GM10248 (cell line): ENCODE measurements at regions of chr5 and their contacts with region 1.

Region 1: GRCh38 chr5:98768160-98769005 is 5.1 kb upstream of the RGMB start:
- DNase-seq: peak; percentile 53
- CTCF ChIP-seq: peak; percentile 90

Region 2: DNA sequence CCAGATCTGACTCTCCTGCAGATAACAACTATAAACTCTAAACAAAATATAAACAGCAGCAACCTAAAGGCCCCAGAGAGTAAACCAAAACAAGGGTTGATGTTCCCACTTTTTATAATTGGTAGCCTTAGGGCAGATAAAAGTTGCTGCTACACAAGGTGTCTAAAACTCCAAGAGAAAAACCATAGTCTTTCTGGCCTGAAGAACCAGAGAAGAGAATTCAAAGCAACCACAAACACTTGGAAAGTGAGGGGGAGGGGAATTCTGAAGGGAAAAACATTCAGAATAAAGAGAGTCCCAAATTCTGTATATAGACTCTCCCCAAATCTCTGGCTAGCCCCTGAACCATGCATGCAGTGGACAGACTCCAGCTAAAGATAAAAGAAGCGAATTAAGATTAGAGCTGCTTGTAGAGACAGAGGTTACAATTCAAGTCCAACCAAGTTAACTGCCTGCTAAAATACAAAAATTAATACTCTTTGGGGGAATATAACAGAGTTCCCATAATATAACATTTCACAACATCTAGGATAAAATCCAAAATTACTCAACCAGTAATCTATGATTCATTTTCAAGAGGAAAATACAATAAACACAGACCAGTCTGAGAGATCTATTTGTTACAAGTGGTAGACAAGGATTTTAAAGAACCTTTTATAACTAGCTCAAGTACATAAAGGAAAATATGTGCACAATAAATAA is 32.4 kb before region 1 on chr5:
- CTCF ChIA-PET with region 1: interaction called, 23 read pairs
- POLR2A ChIA-PET with region 1: no interaction called
- DNase-seq: no peak
- CTCF ChIP-seq: no peak

Region 3: GRCh38 chr5:98742396-98743073 is 25.8 kb before region 1 on chr5:
- CTCF ChIA-PET with region 1: interaction called, 23 read pairs
- POLR2A ChIA-PET with region 1: no interaction called
- DNase-seq: no peak
- CTCF ChIP-seq: no peak

Region 4: GRCh38 chr5:98750693-98751092 is 17.7 kb before region 1 on chr5:
- CTCF ChIA-PET with region 1: interaction called, 30 read pairs
- POLR2A ChIA-PET with region 1: no interaction called
- DNase-seq: no peak
- CTCF ChIP-seq: no peak

Region 5: GRCh38 chr5:98786191-98786853 is 17.9 kb after region 1 on chr5:
- CTCF ChIA-PET with region 1: interaction called, 87 read pairs
- POLR2A ChIA-PET with region 1: no interaction called
- DNase-seq: no peak
- CTCF ChIP-seq: no peak

Region 6: DNA sequence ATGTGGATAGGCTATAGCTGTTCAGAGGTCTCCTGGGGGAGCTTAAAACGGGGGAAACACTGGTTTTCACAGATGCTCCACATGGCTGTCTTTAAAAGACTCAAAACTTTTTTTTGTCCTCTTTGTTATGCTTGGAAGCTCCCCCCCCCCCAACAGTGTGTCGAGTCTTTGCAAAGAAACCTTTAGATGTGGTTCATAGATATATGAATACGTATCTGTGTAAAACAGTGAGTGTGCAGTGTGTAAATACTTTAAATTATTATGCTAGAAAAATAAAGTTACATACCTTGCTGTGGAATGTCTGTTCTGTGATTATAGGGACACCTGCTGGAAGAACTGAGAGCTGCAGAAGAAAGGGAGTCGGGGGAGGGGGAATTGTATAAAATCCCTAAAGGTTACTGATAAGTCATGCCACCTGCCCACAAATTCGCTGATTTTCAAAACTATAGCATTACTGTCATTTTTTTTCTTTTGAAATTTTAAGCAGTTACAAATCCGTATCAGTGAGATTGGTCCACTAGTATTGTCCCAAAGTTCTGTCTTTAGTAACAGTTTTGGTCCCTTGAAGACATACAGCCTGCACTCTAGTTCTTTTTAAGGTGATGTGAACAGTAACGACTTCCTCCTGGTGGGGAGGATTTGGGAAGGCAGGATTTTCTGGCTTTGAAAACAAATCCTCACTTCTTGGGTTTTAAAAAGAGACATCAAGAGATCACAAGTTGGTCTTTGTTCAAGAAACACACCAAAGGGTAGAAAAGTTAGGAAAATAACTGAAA is 28.0 kb after region 1 on chr5:
- CTCF ChIA-PET with region 1: interaction called, 97 read pairs
- POLR2A ChIA-PET with region 1: interaction called, 3 read pairs
- DNase-seq: peak; percentile 68
- CTCF ChIP-seq: peak; percentile 79

Region 7: DNA sequence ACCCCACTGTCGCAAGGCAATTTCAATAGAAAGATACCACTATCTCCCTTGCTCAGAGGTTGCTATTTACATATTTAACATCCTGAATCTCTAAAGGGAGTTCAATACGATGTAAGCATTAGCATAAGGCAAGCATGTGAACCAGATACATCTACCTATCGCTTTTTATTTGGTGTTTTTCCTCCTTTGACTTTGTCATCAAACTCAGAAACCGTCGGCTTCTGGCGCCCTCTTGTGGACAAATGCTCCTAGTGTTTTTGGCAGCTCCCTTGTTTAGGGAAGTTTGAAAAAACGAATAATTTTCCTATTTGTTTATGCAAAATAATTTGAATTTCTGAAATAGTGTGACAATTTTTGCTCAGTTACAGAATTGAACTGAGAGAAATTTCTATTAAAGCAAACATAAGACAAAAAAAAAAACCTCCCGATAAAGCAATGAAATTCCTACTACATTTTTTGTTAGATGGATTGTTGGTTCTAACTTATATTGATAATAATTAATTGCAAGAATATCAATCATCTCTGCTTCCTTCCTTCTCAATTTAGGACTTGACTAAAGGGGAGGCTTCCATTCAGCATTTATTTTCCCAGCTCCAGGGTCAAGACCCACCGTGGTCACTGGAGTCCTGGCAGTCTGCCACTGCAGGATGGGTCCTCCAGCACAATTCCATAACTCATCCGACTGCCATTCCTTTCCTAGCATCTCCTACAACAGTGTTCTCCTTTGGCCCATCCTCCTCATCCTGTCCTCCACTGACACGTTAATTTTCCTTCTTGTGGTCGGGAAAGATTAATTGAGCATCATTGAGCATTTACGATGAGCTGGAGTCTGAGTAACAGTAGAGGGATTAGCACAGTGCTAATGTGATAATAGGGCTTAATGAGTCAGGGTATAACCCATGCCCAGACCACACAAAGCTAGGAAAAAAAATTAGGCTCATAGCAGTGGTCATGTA is 292.2 kb after region 1 on chr5:
- CTCF ChIA-PET with region 1: interaction called, 12 read pairs
- POLR2A ChIA-PET with region 1: no interaction called
- DNase-seq: peak; percentile 60
- CTCF ChIP-seq: peak; percentile 70